Mammary epithelial cell (primary cell): ENCODE measurements at regions of chr16 and their contacts with region 1.

Region 1: GRCh38 chr16:89706507-89707263 is 5.2 kb upstream of the SPATA2L start:
- DNase-seq: no peak
- H3K4me3 ChIP-seq: no peak overlapping the region
- H3K27ac ChIP-seq: no peak overlapping the region
- H3K4me1 ChIP-seq: peaks cover 3% of the 10 kb centered on the region
- H3K27me3 ChIP-seq: no peaks in the 10 kb centered on the region
- CTCF ChIP-seq: no peak

Region 2: DNA sequence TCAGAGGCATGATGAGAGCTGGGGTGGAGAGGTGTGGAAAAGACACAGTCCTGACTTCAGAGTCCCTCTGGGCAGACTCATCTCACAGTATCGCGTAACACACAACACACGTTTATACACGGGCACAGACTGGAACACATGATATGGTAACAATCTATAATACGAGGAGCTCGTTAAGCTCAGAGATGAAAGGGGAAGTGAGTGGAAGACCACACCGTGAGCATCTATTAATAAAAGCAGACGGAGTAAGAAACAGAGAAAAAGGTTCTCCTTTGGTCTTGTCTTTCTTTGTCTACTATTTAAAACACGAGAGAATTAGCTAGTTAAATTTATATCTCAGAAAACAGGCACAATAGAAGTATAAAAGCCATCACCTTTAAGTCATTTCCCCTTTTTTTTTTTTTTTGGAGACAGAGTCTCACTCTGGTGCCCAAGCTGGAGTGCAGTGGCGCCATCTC is 229.9 kb before region 1 on chr16:
- CTCF ChIA-PET with region 1: no interaction called
- dilution Hi-C with region 1: no loop called
- in situ Hi-C with region 1: no loop called
- intact Hi-C with region 1: no loop called
- DNase-seq: no peak
- H3K4me3 ChIP-seq: peak overlapping the region in 1 of 3 experiments; percentile 27
- H3K27ac ChIP-seq: peak overlapping the region; percentile 93
- H3K4me1 ChIP-seq: peaks cover 86% of the 10 kb centered on the region
- H3K27me3 ChIP-seq: no peaks in the 10 kb centered on the region
- CTCF ChIP-seq: no peak

Region 3: DNA sequence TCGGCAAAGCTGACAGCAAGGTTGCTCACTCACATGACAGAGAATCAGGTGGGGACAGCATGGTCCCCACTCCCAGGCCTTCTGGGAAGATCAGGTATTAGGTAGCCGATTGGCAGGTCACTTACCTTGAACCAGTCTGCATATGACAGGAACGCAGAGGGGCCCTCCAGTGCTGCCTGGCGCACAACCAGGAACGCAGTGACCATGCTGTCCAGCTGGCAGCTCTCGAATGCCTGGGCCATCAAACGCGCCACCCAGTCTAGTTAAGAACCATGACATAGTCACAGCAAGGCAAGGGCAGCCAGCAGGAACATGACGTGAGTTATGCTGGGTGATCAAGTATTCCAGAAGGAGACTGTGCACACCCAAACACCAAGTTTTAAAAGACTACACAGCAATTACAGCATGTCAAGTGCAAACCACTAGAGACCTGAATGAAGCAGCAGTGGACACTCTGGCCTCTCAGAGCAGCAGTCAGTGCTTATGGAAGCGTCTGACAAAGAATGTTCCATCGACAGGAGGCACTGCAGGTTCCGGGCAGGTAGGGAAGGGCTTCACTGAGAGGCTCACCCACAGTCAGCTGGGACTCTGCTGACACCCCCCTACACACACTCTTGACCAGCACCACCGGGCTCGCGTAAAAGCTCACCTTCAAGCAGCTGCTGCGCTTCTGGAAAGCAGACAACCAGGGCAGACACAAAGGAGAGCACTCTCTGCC is 84.8 kb after region 1 on chr16:
- CTCF ChIA-PET with region 1: interaction called, 4 read pairs
- dilution Hi-C with region 1: no loop called
- in situ Hi-C with region 1: no loop called
- intact Hi-C with region 1: loop called (anchors 1 kb)
- DNase-seq: no peak
- H3K4me3 ChIP-seq: no peak overlapping the region
- H3K27ac ChIP-seq: no peak overlapping the region
- H3K4me1 ChIP-seq: no peaks in the 10 kb centered on the region
- H3K27me3 ChIP-seq: no peaks in the 10 kb centered on the region
- CTCF ChIP-seq: no peak

Region 4: DNA sequence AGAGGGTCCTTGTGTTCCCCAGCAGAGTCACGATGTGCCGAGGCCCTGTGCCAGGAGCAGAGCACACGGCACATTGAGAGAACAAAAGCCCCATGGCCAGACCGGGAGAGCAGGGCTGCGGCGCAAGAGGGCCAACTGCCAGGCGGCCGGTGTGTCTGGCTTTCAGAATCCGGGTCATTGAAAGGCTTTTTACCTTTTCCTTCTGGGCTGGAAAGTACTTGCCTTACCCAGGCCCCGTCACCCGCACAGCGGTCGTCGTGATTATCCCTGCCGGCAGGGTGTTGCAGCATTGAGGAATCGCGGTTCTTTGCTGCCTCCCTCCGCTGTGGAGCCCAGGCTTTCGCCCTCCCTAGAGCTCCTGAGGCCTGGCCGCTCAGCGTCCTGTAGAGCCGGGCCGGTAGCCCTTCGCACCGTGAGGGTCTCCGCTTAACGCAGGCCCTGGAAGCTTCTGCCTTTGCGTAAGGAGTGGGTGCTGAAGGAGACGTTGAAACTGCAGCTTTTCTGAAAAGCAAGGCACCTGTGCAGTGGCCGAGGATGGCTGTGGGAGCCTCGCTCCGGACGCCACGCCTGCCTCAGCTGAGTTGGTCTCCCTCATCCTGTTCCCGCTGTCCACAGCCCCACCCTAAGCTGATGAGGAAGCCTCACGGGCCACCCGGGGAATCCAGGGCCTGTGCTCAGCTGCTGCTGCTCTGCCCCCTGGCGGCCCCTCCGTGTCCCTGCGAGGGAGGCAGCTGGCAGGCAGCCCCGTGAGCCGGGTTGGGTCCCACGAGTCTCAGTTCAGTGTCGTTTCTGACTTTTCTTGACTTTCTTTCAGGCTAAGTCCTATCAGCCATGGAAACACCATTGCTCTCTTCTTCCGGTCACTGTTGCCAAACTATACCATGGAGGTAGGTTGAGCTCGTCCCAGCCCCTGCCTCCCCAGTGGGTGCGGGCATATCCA is 203.4 kb after region 1 on chr16:
- CTCF ChIA-PET with region 1: no interaction called
- dilution Hi-C with region 1: no loop called
- in situ Hi-C with region 1: no loop called
- intact Hi-C with region 1: loop called (anchors 1 kb)
- DNase-seq: peak; percentile 56
- H3K4me3 ChIP-seq: no peak overlapping the region
- H3K27ac ChIP-seq: no peak overlapping the region
- H3K4me1 ChIP-seq: peaks cover 6% of the 10 kb centered on the region
- H3K27me3 ChIP-seq: no peaks in the 10 kb centered on the region
- CTCF ChIP-seq: peak; percentile 73 to 92